ENCODE measurements at regions of chr15 and their contacts with region 1.

Region 1: DNA sequence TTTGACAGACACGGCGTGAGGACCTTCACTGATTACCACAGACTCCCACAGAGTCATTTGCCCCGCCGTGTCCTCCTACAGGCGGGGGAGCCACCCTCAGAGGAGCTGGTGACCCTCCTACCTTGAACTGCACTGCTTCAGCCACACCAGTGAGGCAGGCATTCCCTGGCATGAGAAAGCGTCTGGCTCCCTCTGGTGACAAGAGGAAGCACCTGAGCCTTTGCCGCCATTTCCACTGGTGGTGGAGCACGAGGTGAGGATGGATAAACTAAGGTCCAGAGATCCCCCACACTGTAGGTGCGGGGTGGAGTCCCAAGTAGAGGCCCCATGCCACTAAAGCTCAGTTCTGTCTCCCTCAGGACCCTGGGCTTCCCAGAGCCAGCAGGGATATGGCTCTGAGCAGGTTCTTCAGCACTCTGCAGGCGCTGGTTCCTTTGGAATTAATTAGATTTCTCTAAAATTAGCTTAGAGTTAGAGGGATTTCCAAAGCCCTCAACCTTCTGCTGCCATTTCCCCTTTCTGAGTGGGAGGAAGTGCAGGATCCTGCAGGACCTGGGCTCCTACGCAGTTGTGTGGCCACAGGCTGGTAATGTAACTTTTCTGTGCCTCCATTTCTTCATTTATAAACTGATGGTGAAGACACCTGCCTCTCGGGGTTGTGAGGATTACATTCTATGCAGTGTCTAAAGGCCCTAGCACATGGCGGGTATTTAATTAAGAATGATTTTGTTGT is 224.0 kb downstream of the SLCO3A1 start:
- ATAC-seq: peak; percentile 69 to 86 (median 84)
- H3K4me3 ChIP-seq: no peak overlapping the region
- H3K27ac ChIP-seq: no peak overlapping the region
- H3K4me1 ChIP-seq: peaks cover 4 to 12% of the 10 kb centered on the region in 2 donors

Region 2: DNA sequence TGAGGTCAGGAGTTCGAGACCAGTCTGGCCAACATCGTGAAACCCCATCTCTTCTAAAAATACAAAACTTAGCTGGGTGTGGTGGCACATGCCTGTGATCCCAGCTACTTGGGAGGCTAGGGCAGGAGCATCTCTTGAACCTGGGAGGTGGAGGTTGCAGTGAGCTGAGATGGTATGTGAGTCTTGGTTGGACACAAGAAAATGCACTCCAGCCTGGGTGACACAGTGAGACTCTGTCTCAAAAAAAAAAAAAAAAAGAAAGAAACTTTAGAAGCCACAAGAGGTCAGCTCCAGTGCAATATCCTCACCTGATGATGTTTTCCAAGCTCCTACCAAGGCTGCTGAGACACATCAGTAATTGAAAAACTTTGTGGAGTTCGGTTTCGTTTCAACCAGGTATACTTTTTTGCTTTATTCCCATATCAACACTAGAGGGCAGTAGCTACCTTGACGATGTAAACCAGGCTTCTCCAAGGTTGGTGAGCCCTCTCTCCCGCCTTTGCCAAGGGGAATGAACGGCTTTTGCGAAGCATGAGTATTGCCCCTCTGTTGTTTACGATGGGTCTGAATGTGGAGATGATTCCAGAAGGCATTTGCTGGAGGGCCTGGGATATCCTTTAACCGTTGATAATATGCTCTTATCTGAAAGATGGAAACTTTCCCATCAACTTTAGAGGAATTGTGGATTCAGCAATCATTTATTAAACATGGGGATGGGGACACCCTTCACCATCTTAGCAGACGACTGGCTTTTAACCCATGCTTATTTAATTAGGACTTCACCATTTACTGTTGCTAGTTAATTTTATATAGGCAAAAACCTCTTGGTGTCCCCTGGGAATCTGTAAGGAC is 774.7 kb before region 1 on chr15:
- in situ Hi-C with region 1: loop called (anchors 10 to 25 kb)
- ATAC-seq: peak; percentile 50 to 86 (median 62)
- H3K4me3 ChIP-seq: no peak overlapping the region
- H3K27ac ChIP-seq: no peak overlapping the region
- H3K4me1 ChIP-seq: peaks cover 0 to 4% of the 10 kb centered on the region in 2 donors

Region 3: DNA sequence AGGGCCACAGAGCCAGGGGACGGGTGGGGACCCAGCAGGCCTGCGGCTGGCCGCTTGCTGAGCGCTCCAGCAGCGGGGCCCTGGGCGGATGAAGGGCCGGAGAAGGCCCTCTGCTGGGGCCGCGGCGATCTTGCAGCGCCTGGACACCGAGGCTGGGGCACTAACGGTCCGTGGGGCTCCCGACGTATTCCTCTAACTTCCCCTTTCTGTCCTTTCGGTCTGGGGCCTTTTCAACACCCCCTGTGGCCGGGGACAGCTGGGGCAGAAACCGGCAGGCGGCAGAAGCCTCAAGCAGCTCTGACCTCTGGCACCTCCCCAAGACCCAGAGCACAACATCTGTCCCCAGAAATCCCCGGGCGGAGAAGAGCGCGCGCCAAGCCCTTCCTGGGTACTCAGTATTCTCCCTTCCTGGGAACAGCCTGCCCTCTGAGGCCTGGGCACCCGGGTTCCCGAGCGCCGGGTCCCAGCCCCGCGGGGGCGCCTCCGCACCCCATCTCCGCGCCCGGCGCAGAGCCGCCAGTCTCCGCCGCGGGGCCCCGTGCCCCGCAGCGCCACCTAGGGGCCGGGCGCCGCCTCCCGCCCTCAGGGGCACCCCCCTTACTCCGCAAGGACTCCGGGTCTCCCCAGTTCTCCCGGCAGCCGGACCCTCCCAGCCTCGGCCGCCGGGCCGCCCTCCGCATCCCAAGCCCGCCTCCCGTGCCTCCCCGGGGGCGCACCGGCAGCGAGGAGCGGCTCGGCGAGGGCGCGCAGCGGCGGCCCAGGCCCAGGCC is 224.6 kb before region 1 on chr15:
- in situ Hi-C with region 1: loop called in 3 of 9 experiments (anchors 25 kb)
- ATAC-seq: peak; percentile 70 to 86 (median 80)
- H3K4me3 ChIP-seq: peak overlapping the region; percentile 55 to 94 (median 88)
- H3K27ac ChIP-seq: peak overlapping the region; percentile 62 to 78
- H3K4me1 ChIP-seq: peaks cover 21 to 25% of the 10 kb centered on the region in 2 donors

Region 4: DNA sequence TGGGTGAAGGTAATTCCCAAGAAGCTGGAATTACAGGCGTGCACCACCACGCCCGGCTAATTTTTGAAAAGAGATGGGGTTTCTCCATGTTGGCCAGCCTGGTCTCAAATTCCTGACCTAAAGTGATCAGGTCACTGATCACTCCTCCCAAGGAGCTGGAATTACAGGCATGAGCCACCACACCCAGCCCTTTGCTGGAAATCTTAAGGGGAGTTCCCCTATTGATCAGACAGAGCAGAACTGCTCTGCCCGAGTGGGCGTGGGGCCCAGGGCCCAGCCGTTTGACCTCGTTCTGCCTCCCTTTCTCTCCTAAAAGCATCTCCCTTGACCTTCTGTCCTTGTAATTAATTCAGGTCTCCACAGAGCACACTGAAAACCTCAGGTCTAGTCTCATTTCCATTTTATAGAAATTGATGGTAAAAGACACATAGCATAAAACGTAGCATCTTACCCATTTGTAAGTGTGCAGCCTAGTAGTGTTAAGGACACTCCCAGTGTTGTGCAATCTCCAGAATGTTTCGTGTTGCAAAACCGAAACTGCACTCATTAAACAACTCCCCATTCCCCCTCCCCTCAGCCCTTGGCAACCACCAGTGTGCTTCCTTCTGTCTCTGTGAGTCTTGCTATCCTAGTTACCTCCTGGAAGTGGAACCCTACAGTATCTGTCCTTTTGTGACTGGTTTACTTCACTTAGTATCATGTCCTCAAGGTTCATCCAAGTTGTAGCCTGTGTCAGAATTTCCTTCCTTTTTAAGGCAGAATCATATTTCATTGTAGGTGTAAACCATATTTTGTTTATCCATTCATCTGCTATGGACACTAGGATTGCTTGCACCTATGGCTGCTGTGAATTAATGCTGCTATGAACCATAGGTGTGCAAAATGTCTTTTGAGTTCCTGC is 134.6 kb before region 1 on chr15:
- in situ Hi-C with region 1: loop called in 1 of 9 experiments (anchors 10 kb)
- ATAC-seq: peak; percentile 35 to 95 (median 70)
- H3K4me3 ChIP-seq: no peak overlapping the region
- H3K27ac ChIP-seq: no peak overlapping the region
- H3K4me1 ChIP-seq: peaks cover 43 to 50% of the 10 kb centered on the region in 2 donors

Region 5: GRCh38 chr15:92197746-92198145 is 120.2 kb after region 1 on chr15:
- in situ Hi-C with region 1: no loop called
- ATAC-seq: peak in 1 of 8 experiments; percentile 15
- H3K4me3 ChIP-seq: no peak overlapping the region
- H3K27ac ChIP-seq: no peak overlapping the region
- H3K4me1 ChIP-seq: no peaks in the 10 kb centered on the region

Region 6: GRCh38 chr15:92714477-92715401 is 637.2 kb after region 1 on chr15:
- in situ Hi-C with region 1: loop called in 3 of 9 experiments (anchors 25 kb)
- ATAC-seq: peak; percentile 81 to 92 (median 90)
- H3K4me3 ChIP-seq: peak overlapping the region; percentile 48 to 50 (median 49)
- H3K27ac ChIP-seq: peak overlapping the region; percentile 62 to 69
- H3K4me1 ChIP-seq: peaks cover 0 to 3% of the 10 kb centered on the region in 2 donors

Measured in motor neuron (in vitro differentiated cells).